ENCODE measurements at regions of chr11 and their contacts with region 1.

Region 1: GRCh38 chr11:6531267-6531752 is 34.2 kb downstream of the DNHD1 start:
- DNase-seq: peak; percentile 75
- H3K4me3 ChIP-seq: no peak overlapping the region
- H3K27ac ChIP-seq: no peak overlapping the region
- H3K4me1 ChIP-seq: no peaks in the 10 kb centered on the region
- H3K27me3 ChIP-seq: no peaks in the 10 kb centered on the region
- CTCF ChIP-seq: peak; percentile 63 to 70
- POLR2A ChIP-seq: no peak

Region 2: DNA sequence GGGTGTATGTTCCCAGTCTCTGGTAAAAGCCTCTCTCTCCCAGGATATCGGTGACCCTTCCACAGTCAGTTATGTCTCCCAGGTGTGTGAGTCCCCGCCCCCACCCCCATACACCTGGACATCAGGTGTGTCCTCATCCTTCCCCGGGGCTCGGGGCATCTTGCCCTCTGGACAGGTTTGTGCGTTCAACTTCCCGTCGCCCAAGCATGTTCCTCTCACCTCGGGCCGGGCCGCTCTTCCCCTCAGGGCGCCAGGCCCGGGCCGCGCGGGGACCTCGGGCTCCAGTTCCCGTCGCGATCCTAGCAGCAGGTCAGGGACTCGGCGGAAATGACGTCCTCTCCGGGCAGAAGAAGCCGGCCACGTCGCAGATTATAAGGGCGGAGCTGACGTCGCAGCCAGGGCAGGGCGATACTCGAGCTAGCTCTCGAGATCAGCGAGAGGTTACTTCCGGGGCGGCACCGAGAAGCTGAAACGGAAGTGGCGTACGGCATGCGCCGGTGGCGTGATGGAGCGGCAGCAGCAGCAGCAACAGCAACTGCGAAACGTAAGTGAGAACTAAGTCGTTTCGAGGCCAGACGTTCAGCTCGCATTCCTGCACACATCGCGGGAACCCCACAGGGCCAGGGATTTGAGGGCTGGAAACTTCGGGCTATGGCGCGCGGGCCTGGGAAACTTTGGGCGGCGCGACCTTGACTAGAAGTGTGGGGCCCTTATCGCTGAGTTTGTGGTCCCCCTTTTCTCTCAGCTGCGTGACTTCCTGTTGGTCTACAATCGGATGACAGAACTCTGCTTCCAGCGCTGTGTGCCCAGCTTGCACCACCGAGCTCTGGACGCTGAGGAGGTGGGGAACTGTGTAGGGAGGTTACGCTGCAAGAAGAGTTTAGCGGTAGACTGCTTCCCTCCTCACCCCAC is 50.0 kb before region 1 on chr11 and contains the starts of genes ARFIP2 and TIMM10B:
- CTCF ChIA-PET with region 1: interaction called, 10 read pairs
- POLR2A ChIA-PET with region 1: no interaction called
- dilution Hi-C with region 1: no loop called
- intact Hi-C with region 1: no loop called
- DNase-seq: peak; percentile 98
- H3K4me3 ChIP-seq: peak within 1 kb of the TSS; percentile 19 to 65 (median 57)
- H3K27ac ChIP-seq: peak within 1 kb of the TSS; percentile 72
- H3K4me1 ChIP-seq: peaks cover 18% of the 10 kb centered on the region
- H3K27me3 ChIP-seq: no peaks in the 10 kb centered on the region
- CTCF ChIP-seq: no peak
- POLR2A ChIP-seq: peak; percentile 70
- total RNA-seq, gene ARFIP2: 46.7 and 48.4 TPM in 2 replicates
- total RNA-seq, gene TIMM10B: 29.2 and 31.3 TPM in 2 replicates

Region 3: DNA sequence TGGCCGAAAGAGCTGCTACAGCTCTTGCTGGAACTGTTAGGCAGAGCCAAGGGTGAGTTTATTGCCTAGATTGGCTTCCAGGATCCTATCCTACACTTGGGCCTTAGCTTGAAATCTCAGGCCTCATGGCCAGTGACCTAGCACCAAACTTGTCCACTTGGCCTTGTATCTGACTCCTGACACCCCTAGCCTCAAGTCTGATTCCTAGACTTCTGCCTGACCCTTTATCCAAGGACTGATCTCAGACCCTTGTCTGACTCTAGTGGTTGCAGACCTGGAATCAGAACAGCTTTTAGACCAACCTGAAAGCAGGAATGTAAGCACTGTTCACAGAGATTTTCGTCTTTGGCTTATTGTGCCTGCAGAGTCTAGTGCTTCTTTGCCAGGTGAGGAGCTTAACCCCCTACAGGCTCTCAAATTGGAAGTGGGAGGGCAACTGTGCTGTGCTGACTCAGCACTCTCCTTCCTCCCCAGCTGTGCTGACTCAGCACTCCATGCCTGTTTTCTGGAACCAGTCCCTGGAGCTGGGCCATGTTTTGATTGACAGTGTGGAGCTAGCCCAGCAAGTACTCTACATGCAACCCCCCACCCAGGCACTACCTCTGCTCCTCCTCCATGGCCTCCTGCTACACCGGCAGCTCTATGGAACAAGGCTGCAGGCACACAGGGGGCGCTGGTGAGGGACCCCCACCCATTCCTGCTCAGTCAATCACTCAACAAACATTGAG is 37.0 kb after region 1 on chr11:
- CTCF ChIA-PET with region 1: interaction called, 23 read pairs
- POLR2A ChIA-PET with region 1: no interaction called
- dilution Hi-C with region 1: no loop called
- intact Hi-C with region 1: no loop called
- DNase-seq: peak; percentile 66
- H3K4me3 ChIP-seq: no peak overlapping the region
- H3K27ac ChIP-seq: no peak overlapping the region
- H3K4me1 ChIP-seq: peaks cover 6% of the 10 kb centered on the region
- H3K27me3 ChIP-seq: no peaks in the 10 kb centered on the region
- CTCF ChIP-seq: no peak
- POLR2A ChIP-seq: no peak

Region 4: GRCh38 chr11:6603287-6604080 is 72.2 kb after region 1 on chr11 and contains the starts of genes ILK and RRP8:
- CTCF ChIA-PET with region 1: interaction called, 122 read pairs
- POLR2A ChIA-PET with region 1: interaction called, 5 read pairs
- dilution Hi-C with region 1: no loop called
- intact Hi-C with region 1: loop called (anchors 1 kb)
- DNase-seq: peak; percentile 93
- H3K4me3 ChIP-seq: peak within 1 kb of the TSS; percentile 62 to 97 (median 90)
- H3K27ac ChIP-seq: peak within 1 kb of the TSS; percentile 83
- H3K4me1 ChIP-seq: peaks cover 44% of the 10 kb centered on the region
- H3K27me3 ChIP-seq: no peaks in the 10 kb centered on the region
- CTCF ChIP-seq: no peak
- POLR2A ChIP-seq: peak; percentile 87
- total RNA-seq, gene ILK: 221 and 233 TPM in 2 replicates
- total RNA-seq, gene RRP8: 19.4 and 23.3 TPM in 2 replicates

Region 5: GRCh38 chr11:6635082-6635932 is 104.0 kb after region 1 on chr11:
- CTCF ChIA-PET with region 1: interaction called, 15 read pairs
- POLR2A ChIA-PET with region 1: no interaction called
- dilution Hi-C with region 1: no loop called
- intact Hi-C with region 1: loop called (anchors 1 kb)
- DNase-seq: peak; percentile 98
- H3K4me3 ChIP-seq: peak overlapping the region in 1 of 3 experiments; percentile 37
- H3K27ac ChIP-seq: peak overlapping the region; percentile 91
- H3K4me1 ChIP-seq: peaks cover 47% of the 10 kb centered on the region
- H3K27me3 ChIP-seq: no peaks in the 10 kb centered on the region
- CTCF ChIP-seq: no peak
- POLR2A ChIP-seq: peak; percentile 83

Region 6: GRCh38 chr11:6695377-6695776 is 164.1 kb after region 1 on chr11:
- CTCF ChIA-PET with region 1: interaction called, 19 read pairs
- POLR2A ChIA-PET with region 1: no interaction called
- dilution Hi-C with region 1: no loop called
- intact Hi-C with region 1: no loop called
- DNase-seq: peak; percentile 95
- H3K4me3 ChIP-seq: peak overlapping the region in 1 of 3 experiments; percentile 6
- H3K27ac ChIP-seq: peak overlapping the region; percentile 88
- H3K4me1 ChIP-seq: peaks cover 31% of the 10 kb centered on the region
- H3K27me3 ChIP-seq: no peaks in the 10 kb centered on the region
- CTCF ChIP-seq: no peak
- POLR2A ChIP-seq: no peak

Measured in endothelial cell of umbilical vein (primary cell).